Colonic mucosa (tissue), 4 donors: ENCODE measurements at regions of chr3 and their contacts with region 1.

Region 1: GRCh38 chr3:154120961-154121700 is at the start of gene ARHGEF26:
- DNase-seq: peak; percentile 96
- H3K4me3 ChIP-seq: peak within 1 kb of the TSS; percentile 75
- H3K27ac ChIP-seq: peak within 1 kb of the TSS; percentile 43
- H3K4me1 ChIP-seq: no peaks in the 10 kb centered on the region
- H3K27me3 ChIP-seq: no peaks in the 10 kb centered on the region
- CTCF ChIP-seq: no peak
- total RNA-seq, gene ARHGEF26: 5.2 to 6.6 TPM

Region 2: DNA sequence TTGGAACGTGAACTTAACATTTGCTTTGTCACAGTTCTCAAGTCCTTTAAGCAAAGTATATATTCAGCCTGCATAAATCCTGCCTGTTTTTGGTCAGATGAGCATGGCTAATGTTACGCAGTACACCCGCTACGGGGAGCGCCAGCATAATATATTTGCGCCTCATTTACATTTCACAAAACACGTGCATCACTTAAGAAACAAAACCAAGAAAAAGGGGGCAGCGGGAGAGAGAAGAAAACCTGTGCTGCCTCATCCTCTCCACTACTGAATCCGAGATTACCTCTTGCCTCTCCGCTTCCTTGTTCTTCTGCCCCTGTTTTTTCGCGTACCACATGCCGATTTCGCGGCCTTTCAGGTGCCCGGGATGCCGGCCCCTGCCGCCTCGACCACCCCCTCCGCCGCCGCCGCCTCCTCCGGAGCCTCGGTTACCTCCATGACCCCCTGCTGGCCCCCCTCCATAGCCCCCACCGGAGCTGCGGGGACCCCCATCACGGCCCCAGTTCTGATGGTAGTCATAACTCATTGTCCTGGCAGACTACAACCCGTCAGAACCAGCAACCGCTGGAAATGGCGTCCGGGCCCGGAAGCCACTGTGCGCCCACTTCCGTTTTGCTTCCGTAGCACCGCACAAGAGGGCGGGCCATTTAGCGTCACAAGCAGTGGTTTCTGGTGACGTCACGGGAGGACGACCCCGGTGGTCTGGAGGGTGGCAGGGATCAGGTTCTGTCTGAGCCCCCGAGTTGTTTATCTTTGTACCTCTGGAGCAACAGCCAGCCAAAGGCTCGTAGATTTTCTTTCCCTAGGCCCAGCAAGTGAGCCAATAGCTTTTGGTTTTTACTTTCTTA is 203.0 kb after region 1 on chr3 and contains the start of gene DHX36:
- intact Hi-C with region 1: loop called (anchors 10 kb)
- DNase-seq: peak; percentile 89
- H3K4me3 ChIP-seq: peak within 1 kb of the TSS; percentile 64
- H3K27ac ChIP-seq: peak within 1 kb of the TSS; percentile 90
- H3K4me1 ChIP-seq: peaks cover 6% of the 10 kb centered on the region
- H3K27me3 ChIP-seq: no peaks in the 10 kb centered on the region
- CTCF ChIP-seq: no peak
- total RNA-seq, gene DHX36: 40.7 to 51.8 TPM